AG04449 (cell line): ENCODE measurements at regions of chr19 and their contacts with region 1.

Region 1: DNA sequence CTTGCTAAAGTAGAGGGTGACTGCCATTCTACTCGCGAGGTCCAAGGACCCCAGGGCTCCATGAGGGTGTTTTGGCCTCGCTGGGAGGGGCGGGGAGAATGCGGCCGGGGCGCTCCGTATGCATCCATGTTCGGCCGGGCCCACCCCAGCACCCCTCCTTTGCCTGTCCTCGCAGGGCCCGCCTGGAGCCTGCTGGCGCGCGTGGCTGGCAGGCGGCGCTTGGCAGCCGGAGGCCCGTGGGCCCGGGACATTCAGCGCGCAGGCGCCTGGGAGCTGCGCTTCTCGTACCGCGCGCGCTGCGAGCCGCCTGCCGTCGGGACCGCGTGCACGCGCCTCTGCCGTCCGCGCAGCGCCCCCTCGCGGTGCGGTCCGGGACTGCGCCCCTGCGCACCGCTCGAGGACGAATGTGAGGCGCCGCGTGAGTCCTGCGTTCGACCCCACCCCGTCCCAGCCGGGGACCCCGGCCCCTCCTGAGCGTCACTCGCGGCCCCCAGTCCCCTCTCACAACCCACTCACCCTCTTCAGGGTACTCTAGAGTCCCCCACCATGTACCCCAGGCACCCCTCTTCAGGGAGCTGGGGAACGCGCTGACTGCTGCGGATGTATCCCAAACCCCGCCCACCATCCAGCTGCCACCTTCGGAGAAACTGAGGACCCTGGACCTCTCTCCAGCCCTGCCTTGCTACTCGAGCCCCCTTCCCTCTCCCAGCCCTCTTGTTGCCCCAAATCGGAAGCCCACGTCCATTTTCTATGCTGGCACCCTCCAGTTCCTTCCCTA is 4.1 kb downstream of the DLL3 start:
- DNase-seq: no peak
- H3K4me3 ChIP-seq: no peak overlapping the region
- CTCF ChIP-seq: peak; percentile 72

Region 2: GRCh38 chr19:39514840-39515550 is 12.2 kb after region 1 on chr19 and contains the start of gene SELENOV:
- CTCF ChIA-PET with region 1: interaction called, 15 read pairs
- POLR2A ChIA-PET with region 1: no interaction called
- DNase-seq: no peak
- H3K4me3 ChIP-seq: no peak within 1 kb of the TSS; the same call in none of the 2 replicates
- CTCF ChIP-seq: no peak